Lower leg skin (tissue), 4 donors: ENCODE measurements at regions of chr6 and their contacts with region 1.

Region 1: GRCh38 chr6:161866570-161866969 is 592.7 kb upstream of the AGPAT4 start:
- DNase-seq: no peak
- H3K4me3 ChIP-seq: no peak overlapping the region
- CTCF ChIP-seq: no peak
- POLR2A ChIP-seq: no peak

Region 2: DNA sequence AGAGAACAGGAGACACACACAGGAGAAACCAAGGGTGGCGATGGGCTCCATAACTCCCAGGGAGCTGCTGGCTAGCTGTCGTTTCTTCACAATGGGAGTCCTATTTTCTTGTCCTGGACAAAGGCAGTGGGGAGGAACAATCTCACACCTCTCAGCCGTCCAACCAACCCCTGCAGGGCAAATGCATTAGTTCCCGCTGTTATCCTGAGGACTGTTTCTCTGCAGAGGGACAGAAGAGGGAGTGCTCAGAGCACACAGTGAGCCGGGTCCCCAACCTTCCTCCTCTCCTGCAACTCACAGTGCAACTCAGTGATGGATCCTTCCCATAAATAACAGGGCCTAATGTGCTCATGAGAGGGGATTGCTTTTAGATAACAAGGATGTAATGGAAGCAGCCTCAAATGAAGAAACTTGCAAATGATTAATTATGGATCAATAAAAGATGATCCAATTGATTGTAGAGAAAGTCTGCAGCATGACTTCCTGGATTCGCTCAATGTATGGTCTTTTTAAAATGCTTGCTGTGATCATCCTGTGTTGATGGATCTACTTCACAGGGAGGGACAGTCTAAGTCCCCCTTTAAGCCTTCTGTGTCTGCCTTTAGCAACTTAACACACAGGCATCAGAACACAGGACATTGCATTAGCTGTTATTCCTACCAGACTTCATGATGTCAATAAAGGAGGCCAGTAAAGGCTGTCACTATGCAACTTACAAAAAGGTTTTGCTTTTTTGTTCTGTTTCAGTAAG is 139.3 kb before region 1 on chr6:
- intact Hi-C with region 1: no loop called
- DNase-seq: no peak
- H3K4me3 ChIP-seq: no peak overlapping the region
- CTCF ChIP-seq: no peak
- POLR2A ChIP-seq: no peak

Region 3: DNA sequence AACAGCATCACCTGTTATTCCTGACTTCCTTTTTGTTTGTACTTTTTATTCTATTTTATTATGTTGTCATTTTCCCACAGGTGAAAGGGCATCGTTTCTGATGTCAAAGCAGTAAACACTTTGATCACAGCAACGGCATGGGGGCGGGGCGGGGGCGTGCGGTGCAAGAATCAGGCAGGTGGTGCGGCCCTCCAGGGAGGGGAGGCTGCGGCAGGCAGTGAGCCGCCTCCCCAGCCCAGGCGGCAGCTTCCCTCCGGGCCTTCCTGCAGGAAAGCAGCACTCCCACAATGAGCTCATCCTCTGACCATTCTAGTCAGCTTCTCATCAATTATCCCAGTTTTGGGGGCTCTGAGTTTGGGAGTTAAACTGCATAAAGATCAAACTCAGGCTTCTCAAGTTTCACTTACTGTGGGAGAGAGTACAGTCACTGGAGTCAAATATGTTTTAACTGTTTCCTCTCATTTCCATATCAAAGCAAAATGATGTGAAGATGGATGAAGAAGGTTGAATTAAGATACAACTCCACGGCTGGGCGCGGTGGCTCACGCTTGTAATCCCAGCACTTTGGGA is 15.7 kb after region 1 on chr6:
- intact Hi-C with region 1: loop called (anchors 1 kb)
- DNase-seq: no peak
- H3K4me3 ChIP-seq: no peak overlapping the region
- CTCF ChIP-seq: no peak
- POLR2A ChIP-seq: no peak

Region 4: GRCh38 chr6:161906561-161906960 is 40.0 kb after region 1 on chr6:
- intact Hi-C with region 1: loop called (anchors 2 kb)
- DNase-seq: no peak
- H3K4me3 ChIP-seq: no peak overlapping the region
- CTCF ChIP-seq: no peak
- POLR2A ChIP-seq: no peak